GM23248 (cell line): ENCODE measurements at regions of chr5 and their contacts with region 1.

Region 1: DNA sequence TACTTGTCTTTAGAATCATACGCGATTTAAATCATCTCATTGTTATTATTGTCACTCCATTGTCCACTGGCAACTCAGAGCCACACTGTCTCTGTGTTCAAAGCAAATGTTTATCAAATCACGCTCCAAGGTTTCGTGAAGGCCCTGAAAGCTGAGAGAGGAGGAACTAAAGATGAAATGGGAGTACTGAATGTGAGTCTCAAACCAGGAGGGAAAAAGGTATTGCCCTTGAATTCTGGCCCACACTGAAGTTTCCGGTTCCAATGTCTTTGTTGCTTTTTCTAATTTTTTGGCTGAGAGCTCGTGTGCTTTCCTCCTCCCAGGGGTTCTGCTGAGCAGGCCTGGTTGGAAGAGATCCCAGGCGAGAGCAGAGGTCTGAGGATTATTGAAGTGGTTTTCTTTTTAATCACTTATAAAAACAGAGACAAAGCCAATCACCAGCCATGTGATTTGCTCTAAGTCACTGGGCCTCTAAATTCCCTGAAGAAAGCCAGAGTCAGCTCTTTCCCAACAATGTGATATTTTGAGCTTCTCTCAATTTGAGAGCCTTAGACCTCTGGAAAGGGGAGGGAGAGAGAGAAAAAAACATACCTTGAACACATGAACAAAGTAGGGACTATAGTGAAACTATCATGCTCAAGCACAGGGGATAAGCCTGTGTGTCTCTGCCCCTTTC is 420.8 kb upstream of the GRAMD2B start:
- DNase-seq: peak; percentile 86
- H3K4me3 ChIP-seq: peak overlapping the region; percentile 10
- H3K27ac ChIP-seq: peak overlapping the region; percentile 44
- H3K4me1 ChIP-seq: peaks cover 26% of the 10 kb centered on the region
- H3K27me3 ChIP-seq: no peaks in the 10 kb centered on the region

Region 2: DNA sequence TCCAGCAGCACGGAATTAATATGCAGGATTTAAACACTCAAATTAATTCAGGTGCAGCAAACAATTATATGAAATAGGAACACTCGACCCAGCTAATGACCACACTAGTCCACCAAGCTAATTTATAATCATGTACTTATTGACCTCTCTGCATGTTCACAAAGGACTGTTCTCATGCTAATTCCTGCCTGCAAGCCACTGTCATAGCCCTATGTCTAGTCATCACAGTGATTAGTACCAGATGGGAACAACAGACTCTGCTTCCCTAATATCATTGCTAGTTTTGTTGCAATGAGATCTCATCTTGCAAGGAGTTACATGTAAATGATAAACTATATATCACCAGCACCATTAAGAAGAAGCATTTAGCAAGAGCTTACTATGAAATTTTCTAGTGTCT is 132.1 kb before region 1 on chr5:
- in situ Hi-C with region 1: no loop called
- DNase-seq: peak; percentile 73
- H3K4me3 ChIP-seq: no peak overlapping the region
- H3K27ac ChIP-seq: no peak overlapping the region
- H3K4me1 ChIP-seq: 0 out of 2 replicates have a peak, but pooled peaks cover 4% of the 10 kb centered on the region
- H3K27me3 ChIP-seq: no peaks in the 10 kb centered on the region

Region 3: GRCh38 chr5:126544087-126544740 is 541.9 kb after region 1 on chr5:
- in situ Hi-C with region 1: loop called (anchors 25 kb)
- DNase-seq: peak; percentile 52
- H3K4me3 ChIP-seq: no peak overlapping the region
- H3K27ac ChIP-seq: no peak overlapping the region
- H3K4me1 ChIP-seq: no peaks in the 10 kb centered on the region; the same call in 1 of the 2 replicates
- H3K27me3 ChIP-seq: no peaks in the 10 kb centered on the region